PC-9 (cell line): ENCODE measurements at regions of chr5 and their contacts with region 1.

Region 1: DNA sequence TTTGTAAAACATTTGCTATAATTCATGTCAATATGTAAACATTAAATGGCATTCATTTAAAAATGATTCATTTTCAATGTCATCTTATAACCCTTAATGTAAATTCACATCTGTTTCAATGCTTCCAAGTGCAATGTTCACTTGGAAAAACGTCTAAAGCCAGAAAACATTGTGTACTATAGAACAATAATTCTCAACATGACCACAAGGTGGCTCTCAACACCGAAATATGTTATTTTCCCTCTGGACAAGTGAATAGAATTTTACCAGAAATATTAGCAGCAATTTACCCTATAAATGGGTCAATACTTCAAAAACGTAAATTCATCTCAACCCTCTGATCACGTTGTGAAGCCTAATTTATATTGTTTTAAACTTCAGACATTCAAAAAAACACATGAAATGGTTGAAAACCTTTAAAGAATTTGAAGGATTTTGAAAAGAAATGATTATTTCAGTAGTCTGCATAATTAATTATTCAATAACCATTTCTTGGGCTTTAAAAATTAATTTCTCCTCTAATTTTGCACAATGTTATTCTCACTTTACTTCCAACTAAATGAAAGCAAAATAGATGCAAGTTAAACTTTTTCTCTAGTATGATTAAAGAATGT is 11.0 kb downstream of the CDH10 start:
- DNase-seq: peak in 1 of 2 experiments; percentile 21
- H3K4me3 ChIP-seq: no peak overlapping the region
- H3K27ac ChIP-seq: no peak overlapping the region
- H3K4me1 ChIP-seq: no peaks in the 10 kb centered on the region
- H3K27me3 ChIP-seq: no peaks in the 10 kb centered on the region
- CTCF ChIP-seq: peak; percentile 85

Region 2: GRCh38 chr5:24232929-24233498 is 400.8 kb before region 1 on chr5:
- CTCF ChIA-PET with region 1: no interaction called
- POLR2A ChIA-PET with region 1: no interaction called
- intact Hi-C with region 1: loop called (anchors 10 kb)
- DNase-seq: no peak
- H3K4me3 ChIP-seq: no peak overlapping the region
- H3K27ac ChIP-seq: no peak overlapping the region
- H3K4me1 ChIP-seq: no peaks in the 10 kb centered on the region
- H3K27me3 ChIP-seq: no peaks in the 10 kb centered on the region
- CTCF ChIP-seq: no peak

Region 3: DNA sequence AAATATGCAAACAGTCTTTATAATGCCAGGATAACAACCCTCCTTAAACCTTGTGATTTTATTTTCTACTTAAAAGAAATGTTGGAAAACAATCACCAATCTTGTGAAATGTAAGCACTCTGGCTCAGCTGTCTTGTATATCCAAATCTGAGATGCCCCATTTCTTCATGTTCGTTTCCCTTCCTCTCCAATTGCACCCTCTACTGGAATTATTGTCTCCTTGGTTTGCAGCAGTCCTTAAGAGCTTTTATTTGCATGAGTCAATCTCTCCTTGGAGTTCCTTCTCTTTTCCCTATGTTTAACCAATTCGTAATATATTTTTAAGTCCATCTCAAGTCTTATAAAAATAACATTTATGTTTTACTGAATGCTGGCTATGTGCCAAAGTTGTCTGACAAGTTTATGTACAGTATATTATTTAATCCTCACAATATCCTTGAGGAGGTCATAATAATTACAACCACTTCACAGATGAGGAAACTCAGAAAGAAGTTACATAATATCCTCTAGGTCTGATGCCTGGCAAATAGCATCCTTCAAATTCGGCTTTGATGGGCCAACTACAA is 373.0 kb after region 1 on chr5:
- CTCF ChIA-PET with region 1: interaction called, 4 read pairs
- POLR2A ChIA-PET with region 1: no interaction called
- intact Hi-C with region 1: loop called (anchors 1 kb)
- DNase-seq: peak; percentile 5 to 59
- H3K4me3 ChIP-seq: no peak overlapping the region
- H3K27ac ChIP-seq: no peak overlapping the region
- H3K4me1 ChIP-seq: no peaks in the 10 kb centered on the region
- H3K27me3 ChIP-seq: no peaks in the 10 kb centered on the region
- CTCF ChIP-seq: peak; percentile 57

Region 4: GRCh38 chr5:25544652-25545249 is 910.9 kb after region 1 on chr5:
- CTCF ChIA-PET with region 1: no interaction called
- POLR2A ChIA-PET with region 1: no interaction called
- intact Hi-C with region 1: loop called (anchors 10 kb)
- DNase-seq: peak; percentile 43 to 46
- H3K4me3 ChIP-seq: no peak overlapping the region
- H3K27ac ChIP-seq: no peak overlapping the region
- H3K4me1 ChIP-seq: no peaks in the 10 kb centered on the region
- H3K27me3 ChIP-seq: no peaks in the 10 kb centered on the region
- CTCF ChIP-seq: peak; percentile 78

Region 5: DNA sequence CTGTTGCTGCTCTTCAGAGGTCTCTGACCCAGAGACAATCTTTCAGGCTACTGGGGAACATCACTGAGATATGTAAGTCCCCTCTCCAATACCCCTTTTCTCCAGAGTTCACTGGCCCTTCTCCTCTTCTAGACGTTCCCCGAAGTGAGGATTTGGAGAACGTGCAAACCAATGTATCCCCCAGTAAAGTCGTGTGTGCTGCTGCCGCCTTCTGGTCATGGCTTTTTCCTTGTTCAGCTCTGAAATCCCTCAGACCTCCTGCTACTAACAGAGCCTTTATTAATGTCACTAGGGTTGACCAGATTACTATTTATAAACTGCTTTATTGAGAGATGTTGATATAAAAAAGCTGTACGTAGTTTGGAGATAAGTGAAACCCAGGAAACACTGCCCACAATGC is 1375.9 kb after region 1 on chr5:
- CTCF ChIA-PET with region 1: no interaction called
- POLR2A ChIA-PET with region 1: no interaction called
- intact Hi-C with region 1: loop called (anchors 5 kb)
- DNase-seq: peak in 1 of 2 experiments; percentile 26
- H3K4me3 ChIP-seq: no peak overlapping the region
- H3K27ac ChIP-seq: no peak overlapping the region
- H3K4me1 ChIP-seq: no peaks in the 10 kb centered on the region
- H3K27me3 ChIP-seq: no peaks in the 10 kb centered on the region
- CTCF ChIP-seq: peak; percentile 29; the same call in 1 of the 2 replicates

Region 6: GRCh38 chr5:26329562-26330189 is 1695.9 kb after region 1 on chr5:
- CTCF ChIA-PET with region 1: no interaction called
- POLR2A ChIA-PET with region 1: no interaction called
- intact Hi-C with region 1: loop called (anchors 5 kb)
- DNase-seq: no peak
- H3K4me3 ChIP-seq: no peak overlapping the region
- H3K27ac ChIP-seq: no peak overlapping the region
- H3K4me1 ChIP-seq: no peaks in the 10 kb centered on the region
- H3K27me3 ChIP-seq: no peaks in the 10 kb centered on the region
- CTCF ChIP-seq: peak; percentile 72

Region 7: GRCh38 chr5:26482810-26483375 is 1849.1 kb after region 1 on chr5:
- CTCF ChIA-PET with region 1: no interaction called
- POLR2A ChIA-PET with region 1: no interaction called
- intact Hi-C with region 1: loop called (anchors 5 kb)
- DNase-seq: peak in 1 of 2 experiments; percentile 53
- H3K4me3 ChIP-seq: no peak overlapping the region
- H3K27ac ChIP-seq: no peak overlapping the region
- H3K4me1 ChIP-seq: no peaks in the 10 kb centered on the region
- H3K27me3 ChIP-seq: no peaks in the 10 kb centered on the region
- CTCF ChIP-seq: peak; percentile 73